Sigmoid colon (tissue), 7 donors: ENCODE measurements at regions of chr10 and their contacts with region 1.

Region 1: GRCh38 chr10:75121322-75121721 is 9.9 kb downstream of the SAMD8 start:
- DNase-seq: no peak
- H3K4me3 ChIP-seq: no peak overlapping the region
- H3K27ac ChIP-seq: no peak overlapping the region
- H3K4me1 ChIP-seq: peaks cover 0 to 30% (median 17%) of the 10 kb centered on the region in 4 donors
- H3K27me3 ChIP-seq: no peaks in the 10 kb centered on the region
- CTCF ChIP-seq: no peak
- EP300 ChIP-seq: no peak
- POLR2A ChIP-seq: no peak

Region 2: GRCh38 chr10:74963549-74963948 is 157.8 kb before region 1 on chr10:
- intact Hi-C with region 1: no loop called
- DNase-seq: no peak
- H3K4me3 ChIP-seq: no peak overlapping the region
- H3K27ac ChIP-seq: no peak overlapping the region
- H3K4me1 ChIP-seq: peaks cover 0 to 8% (median 7%) of the 10 kb centered on the region in 4 donors
- H3K27me3 ChIP-seq: no peaks in the 10 kb centered on the region
- CTCF ChIP-seq: no peak
- EP300 ChIP-seq: no peak
- POLR2A ChIP-seq: no peak

Region 3: DNA sequence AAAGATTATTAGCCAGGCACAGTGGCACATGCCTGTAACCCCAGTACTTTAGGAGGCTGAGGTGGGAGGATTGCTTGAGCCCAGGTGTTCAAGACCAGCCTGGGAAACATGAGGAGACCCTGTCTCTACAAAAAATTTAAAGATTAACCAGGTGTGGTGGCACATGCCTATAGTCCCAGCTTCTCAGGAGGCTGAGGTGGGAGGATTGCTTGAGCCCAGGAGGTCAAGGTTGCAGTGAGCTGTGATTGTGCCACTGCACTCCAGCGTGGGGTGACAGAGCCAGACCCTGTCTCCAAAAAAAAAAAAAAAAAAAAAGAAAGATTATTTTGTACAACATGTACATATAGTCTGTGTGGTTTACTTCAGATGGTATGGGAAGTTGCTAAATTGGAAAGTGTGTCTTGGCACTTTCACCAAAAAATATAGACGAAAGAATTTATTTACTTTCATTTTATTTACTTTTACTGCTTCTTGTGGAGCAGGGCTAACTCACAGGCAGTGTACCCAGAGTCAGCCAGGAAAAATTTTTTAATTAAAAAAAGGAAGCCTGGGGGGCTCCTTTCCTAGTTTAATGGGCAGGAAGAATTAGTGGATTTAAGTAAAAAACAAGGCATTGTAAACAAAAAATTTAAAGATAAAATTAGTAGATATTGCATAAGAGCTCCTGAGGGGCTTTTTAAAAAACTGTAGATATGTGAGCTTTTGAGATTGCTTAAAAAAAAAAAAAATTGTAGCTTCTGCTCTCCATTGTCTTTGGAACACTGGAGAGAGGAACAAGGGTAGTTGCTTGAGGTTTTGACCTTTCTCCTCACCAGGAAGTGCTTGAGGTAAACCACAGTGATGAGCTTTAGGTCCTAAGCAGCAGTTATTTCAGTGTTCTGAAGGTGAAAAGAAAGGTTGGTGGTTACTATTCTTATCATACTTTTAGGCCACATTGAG is 44.6 kb after region 1 on chr10:
- intact Hi-C with region 1: loop called (anchors 5 kb)
- DNase-seq: no peak
- H3K4me3 ChIP-seq: no peak overlapping the region
- H3K27ac ChIP-seq: no peak overlapping the region
- H3K4me1 ChIP-seq: peaks cover 0 to 13% (median 10%) of the 10 kb centered on the region in 4 donors
- H3K27me3 ChIP-seq: no peaks in the 10 kb centered on the region
- CTCF ChIP-seq: no peak
- EP300 ChIP-seq: no peak
- POLR2A ChIP-seq: no peak